Ovary (tissue), 10 donors: ENCODE measurements at regions of chr6 and their contacts with region 1.

Region 1: DNA sequence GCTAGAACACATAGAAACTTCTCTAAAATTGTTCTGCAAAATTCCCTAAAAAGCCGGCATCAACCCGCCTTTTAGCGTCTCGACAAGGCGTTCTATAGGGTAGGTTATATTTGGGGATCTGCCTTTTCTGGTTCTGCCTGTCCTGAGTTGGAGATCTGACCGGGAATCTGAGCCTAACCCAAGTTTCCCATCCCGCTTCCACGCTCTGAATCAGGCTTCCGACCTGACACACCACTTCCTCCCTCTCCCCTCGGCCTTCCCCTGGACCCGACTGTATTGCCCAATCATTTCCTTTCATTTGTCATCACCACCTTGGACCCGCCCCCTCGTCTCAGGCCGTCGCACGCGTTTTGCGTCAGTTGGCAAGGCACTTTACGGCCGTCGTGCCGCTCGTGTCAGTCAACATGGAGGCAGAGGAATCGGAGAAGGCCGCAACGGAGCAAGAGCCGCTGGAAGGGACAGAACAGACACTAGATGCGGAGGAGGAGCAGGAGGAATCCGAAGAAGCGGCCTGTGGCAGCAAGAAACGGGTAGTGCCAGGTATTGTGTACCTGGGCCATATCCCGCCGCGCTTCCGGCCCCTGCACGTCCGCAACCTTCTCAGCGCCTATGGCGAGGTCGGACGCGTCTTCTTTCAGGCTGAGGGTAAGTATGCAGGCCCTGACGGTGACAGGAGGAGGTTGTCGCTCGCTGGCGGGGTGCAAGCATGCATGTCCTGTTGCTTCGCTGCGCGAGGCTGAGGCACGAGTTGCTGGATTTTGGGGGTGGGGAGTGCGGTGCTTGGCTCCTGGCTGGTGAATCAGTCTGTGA is at the start of gene ABT1:
- DNase-seq: peak; percentile 98 to 99 (median 98)
- H3K4me3 ChIP-seq: peak within 1 kb of the TSS; percentile 89
- H3K27ac ChIP-seq: peak within 1 kb of the TSS; percentile 67 to 77
- H3K4me1 ChIP-seq: peaks cover 4% of the 10 kb centered on the region
- H3K27me3 ChIP-seq: no peaks in the 10 kb centered on the region
- CTCF ChIP-seq: no peak
- EP300 ChIP-seq: no peak
- POLR2A ChIP-seq: peak; percentile 87
- total RNA-seq, gene ABT1: 10.9 to 17.5 (median 15.5) TPM

Region 2: DNA sequence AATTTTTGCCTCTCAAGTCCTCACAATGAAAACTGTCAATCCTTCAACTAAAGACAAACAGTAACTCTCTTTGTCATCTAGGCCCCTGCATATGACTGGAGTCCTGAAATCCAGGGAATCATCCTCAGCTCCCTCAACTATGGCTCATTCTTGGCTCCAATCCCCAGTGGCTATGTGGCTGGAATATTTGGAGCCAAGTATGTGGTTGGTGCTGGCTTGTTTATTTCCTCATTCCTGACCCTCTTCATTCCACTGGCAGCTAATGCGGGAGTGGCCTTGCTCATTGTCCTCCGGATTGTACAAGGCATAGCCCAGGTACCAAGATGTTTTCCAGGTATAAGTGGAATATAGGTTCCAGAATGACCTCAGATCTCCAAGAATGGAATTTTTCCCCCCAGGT is 826.8 kb before region 1 on chr6:
- intact Hi-C with region 1: no loop called
- DNase-seq: no peak
- H3K4me3 ChIP-seq: no peak overlapping the region
- H3K27ac ChIP-seq: no peak overlapping the region
- H3K4me1 ChIP-seq: no peaks in the 10 kb centered on the region
- H3K27me3 ChIP-seq: no peaks in the 10 kb centered on the region
- CTCF ChIP-seq: no peak
- EP300 ChIP-seq: no peak
- POLR2A ChIP-seq: no peak

Region 3: GRCh38 chr6:26175428-26176181 is 421.2 kb before region 1 on chr6:
- intact Hi-C with region 1: loop called in 1 of 4 experiments (anchors 10 kb)
- DNase-seq: no peak
- H3K4me3 ChIP-seq: no peak overlapping the region
- H3K27ac ChIP-seq: no peak overlapping the region
- H3K4me1 ChIP-seq: peaks cover 2% of the 10 kb centered on the region
- H3K27me3 ChIP-seq: no peaks in the 10 kb centered on the region
- CTCF ChIP-seq: peak in 2 of 3 donors; percentile 20 to 50
- EP300 ChIP-seq: no peak
- POLR2A ChIP-seq: no peak

Region 4: DNA sequence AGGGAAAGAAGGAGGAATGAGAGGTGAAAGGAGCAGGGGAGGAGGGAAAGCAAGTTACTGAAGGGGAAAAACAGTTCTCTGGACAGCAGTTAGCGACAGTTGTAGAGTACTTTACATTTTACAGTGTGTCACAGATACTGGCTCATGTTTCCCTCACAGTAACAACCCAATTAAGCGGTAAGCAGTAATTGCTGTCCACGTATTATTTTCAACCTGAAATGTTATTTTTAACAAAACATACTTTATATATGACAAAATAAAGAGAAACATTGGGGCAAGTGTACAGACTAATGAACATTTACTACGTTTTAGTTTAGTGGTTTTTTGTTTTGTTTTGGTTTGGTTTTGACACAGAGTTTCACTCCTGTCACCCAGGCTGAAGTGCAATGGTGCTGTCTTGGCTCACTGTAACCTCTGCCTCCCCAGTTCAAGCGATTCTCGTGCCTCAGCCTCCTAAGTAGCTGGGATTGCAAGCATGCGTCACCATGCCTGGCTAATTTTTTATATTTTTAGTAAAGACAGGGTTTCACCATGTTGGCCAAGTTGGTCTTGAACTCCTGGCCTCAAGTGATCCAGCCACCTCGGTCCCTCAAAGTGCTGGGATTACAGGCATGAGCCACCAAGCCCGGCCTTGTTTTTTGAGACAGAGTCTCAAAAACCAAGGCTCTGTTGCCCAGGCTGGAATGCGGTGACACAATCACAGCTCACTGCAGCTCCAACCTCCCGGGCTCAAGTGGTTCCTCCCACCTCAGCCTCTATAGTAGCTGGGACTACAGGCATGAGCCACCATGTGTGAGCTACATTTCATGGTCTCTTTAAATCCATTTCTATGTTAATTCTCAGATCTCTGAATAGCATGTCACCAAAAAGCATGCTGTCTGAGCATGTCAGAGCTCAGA is 254.4 kb before region 1 on chr6:
- intact Hi-C with region 1: loop called in 3 of 4 experiments (anchors 5 to 10 kb)
- DNase-seq: no peak
- H3K4me3 ChIP-seq: peak overlapping the region; percentile 18
- H3K27ac ChIP-seq: no peak overlapping the region
- H3K4me1 ChIP-seq: no peaks in the 10 kb centered on the region
- H3K27me3 ChIP-seq: no peaks in the 10 kb centered on the region
- CTCF ChIP-seq: no peak
- EP300 ChIP-seq: no peak
- POLR2A ChIP-seq: no peak

Region 5: GRCh38 chr6:26554697-26555504 is 41.9 kb before region 1 on chr6:
- intact Hi-C with region 1: no loop called
- DNase-seq: peak in 4 of 5 donors; percentile 49 to 62 (median 56)
- H3K4me3 ChIP-seq: peak overlapping the region; percentile 46
- H3K27ac ChIP-seq: peak overlapping the region; percentile 38 to 72
- H3K4me1 ChIP-seq: peaks cover 3% of the 10 kb centered on the region
- H3K27me3 ChIP-seq: no peaks in the 10 kb centered on the region
- CTCF ChIP-seq: no peak
- EP300 ChIP-seq: no peak
- POLR2A ChIP-seq: no peak

Region 6: DNA sequence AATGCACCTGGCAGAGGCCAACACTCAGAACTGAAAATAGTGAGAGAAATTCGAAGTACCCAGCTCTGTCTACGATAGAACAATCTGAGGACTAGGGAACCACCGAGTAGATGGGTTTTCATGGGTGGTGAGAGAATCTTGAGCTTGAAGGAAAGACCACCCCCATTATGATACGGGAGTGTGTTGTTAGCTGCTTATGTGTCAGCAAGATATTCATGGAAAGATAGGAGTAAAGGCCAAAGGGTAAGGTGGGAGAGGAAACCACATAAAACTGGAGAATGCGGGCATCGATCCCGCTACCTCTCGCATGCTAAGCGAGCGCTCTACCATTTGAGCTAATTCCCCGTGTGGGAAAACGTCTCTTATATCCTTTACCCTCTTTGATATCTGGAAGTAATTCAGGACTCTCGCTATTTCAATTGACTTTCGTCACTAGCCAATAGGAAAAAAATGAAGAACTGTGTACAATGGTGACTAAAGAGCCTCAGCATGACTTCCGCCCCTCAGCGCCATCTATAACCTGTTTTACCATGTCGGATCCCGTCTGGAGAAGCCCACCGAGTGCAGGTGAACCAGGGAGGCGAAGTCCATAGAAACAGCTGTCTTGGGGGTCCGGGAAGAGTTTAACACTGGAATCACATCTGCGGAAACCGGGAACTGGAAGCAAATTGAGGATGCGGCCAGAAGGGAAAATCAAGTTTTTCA is 25.0 kb before region 1 on chr6:
- intact Hi-C with region 1: loop called in 1 of 4 experiments (anchors 2 kb)
- DNase-seq: peak in 4 of 5 donors; percentile 51 to 75 (median 52)
- H3K4me3 ChIP-seq: peak overlapping the region; percentile 37
- H3K27ac ChIP-seq: peak overlapping the region in 1 of 2 donors; percentile 43
- H3K4me1 ChIP-seq: no peaks in the 10 kb centered on the region
- H3K27me3 ChIP-seq: no peaks in the 10 kb centered on the region
- CTCF ChIP-seq: no peak
- EP300 ChIP-seq: no peak
- POLR2A ChIP-seq: no peak

Region 7: DNA sequence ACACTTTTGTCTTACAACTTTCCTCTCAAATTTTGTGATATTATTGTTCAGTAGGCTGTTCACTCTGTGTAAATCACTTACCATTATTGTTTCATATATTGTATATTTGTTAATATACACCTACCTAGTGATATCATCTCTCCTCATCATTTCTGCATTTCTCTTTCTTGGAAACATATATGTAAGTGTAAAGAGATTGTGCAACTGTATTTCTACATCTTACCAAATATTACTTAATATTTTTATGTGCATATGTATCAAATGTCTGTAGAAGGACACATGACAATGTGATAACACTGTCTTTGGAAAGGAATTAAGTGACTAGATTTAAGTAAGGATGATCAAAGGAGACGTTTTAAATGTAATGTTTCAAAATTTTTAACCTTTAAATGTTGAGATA is 32.6 kb after region 1 on chr6:
- intact Hi-C with region 1: no loop called
- DNase-seq: no peak
- H3K4me3 ChIP-seq: no peak overlapping the region
- H3K27ac ChIP-seq: no peak overlapping the region
- H3K4me1 ChIP-seq: no peaks in the 10 kb centered on the region
- H3K27me3 ChIP-seq: no peaks in the 10 kb centered on the region
- CTCF ChIP-seq: no peak
- EP300 ChIP-seq: no peak
- POLR2A ChIP-seq: no peak